ENCODE measurements at regions of chr4 and their contacts with region 1.

Region 1: GRCh38 chr4:26885912-26886274 is 25.3 kb downstream of the STIM2 start:
- DNase-seq: peak; percentile 87
- ATAC-seq: peak; percentile 74
- H3K4me3 ChIP-seq: peak overlapping the region in 4 of 5 experiments; percentile 25 to 61 (median 42)
- H3K4me3 Mint-ChIP-seq: peak overlapping the region; percentile 78
- H3K27ac ChIP-seq: peak overlapping the region; percentile 95 to 98
- H3K27ac Mint-ChIP-seq: peak overlapping the region; percentile 86
- H3K4me1 ChIP-seq: peaks cover 70 to 71% of the 10 kb centered on the region in 2 donors
- H3K4me1 Mint-ChIP-seq: peaks cover 83% of the 10 kb centered on the region
- H3K27me3 ChIP-seq: no peaks in the 10 kb centered on the region
- H3K27me3 Mint-ChIP-seq: no peaks in the 10 kb centered on the region
- CTCF ChIP-seq: no peak

Region 2: DNA sequence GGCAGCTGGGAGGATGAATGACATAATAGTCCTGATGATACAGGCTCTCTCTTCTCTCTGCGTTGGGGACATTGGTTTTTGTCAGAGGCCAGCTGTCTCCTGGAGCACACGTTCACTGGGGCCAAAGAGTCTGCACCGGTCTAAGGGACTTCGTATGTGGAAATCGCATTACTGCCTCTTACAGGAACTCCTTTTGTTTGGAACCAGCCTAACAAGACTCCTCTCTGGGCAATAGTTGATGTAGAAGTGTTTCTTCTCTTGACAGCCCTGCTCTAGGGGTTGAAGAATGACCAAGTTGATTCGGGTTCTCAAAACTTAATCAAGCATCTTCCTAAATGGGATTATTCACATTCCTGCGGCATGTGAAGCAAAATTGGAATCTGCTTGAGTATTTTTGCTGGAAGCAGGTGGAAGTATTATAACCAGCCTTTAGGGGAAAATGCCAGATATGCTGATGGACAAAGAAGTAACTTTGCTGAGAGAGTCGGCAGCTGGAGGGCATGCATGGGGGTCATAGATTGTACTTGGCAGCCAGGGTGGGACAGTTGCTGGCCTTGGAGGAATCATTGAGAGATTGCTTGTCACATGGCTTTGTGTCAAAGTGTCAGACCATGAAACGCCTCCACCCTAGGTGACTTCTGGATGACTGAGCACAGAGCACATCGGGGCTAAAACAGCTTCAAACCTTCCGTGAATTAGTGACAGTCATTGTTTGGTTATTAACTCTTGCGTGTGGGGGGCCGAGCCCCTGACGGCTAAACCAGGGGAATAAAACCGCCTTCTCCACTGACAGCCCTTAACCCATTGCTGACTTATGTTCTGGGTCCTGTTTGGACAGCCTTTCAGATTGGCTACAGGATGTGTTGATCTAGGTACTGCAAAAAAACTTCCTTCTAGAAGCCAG is 1264.6 kb before region 1 on chr4:
- CTCF ChIA-PET with region 1: no interaction called
- POLR2A ChIA-PET with region 1: no interaction called
- intact Hi-C with region 1: no loop called
- DNase-seq: no peak
- ATAC-seq: no peak
- H3K4me3 ChIP-seq: no peak overlapping the region
- H3K4me3 Mint-ChIP-seq: no peak overlapping the region
- H3K27ac ChIP-seq: no peak overlapping the region
- H3K27ac Mint-ChIP-seq: no peak overlapping the region
- H3K4me1 ChIP-seq: no peaks in the 10 kb centered on the region
- H3K4me1 Mint-ChIP-seq: no peaks in the 10 kb centered on the region
- H3K27me3 ChIP-seq: peaks cover 0 to 5% (median 0%) of the 10 kb centered on the region in 4 experiments
- H3K27me3 Mint-ChIP-seq: peaks cover 16% of the 10 kb centered on the region
- CTCF ChIP-seq: no peak

Region 3: GRCh38 chr4:26731351-26732035 is 154.4 kb before region 1 on chr4:
- CTCF ChIA-PET with region 1: no interaction called
- POLR2A ChIA-PET with region 1: no interaction called
- intact Hi-C with region 1: no loop called
- DNase-seq: no peak
- ATAC-seq: no peak
- H3K4me3 ChIP-seq: no peak overlapping the region
- H3K4me3 Mint-ChIP-seq: no peak overlapping the region
- H3K27ac ChIP-seq: no peak overlapping the region
- H3K27ac Mint-ChIP-seq: no peak overlapping the region
- H3K4me1 ChIP-seq: no peaks in the 10 kb centered on the region
- H3K4me1 Mint-ChIP-seq: no peaks in the 10 kb centered on the region
- H3K27me3 ChIP-seq: no peaks in the 10 kb centered on the region
- H3K27me3 Mint-ChIP-seq: no peaks in the 10 kb centered on the region
- CTCF ChIP-seq: no peak

Region 4: DNA sequence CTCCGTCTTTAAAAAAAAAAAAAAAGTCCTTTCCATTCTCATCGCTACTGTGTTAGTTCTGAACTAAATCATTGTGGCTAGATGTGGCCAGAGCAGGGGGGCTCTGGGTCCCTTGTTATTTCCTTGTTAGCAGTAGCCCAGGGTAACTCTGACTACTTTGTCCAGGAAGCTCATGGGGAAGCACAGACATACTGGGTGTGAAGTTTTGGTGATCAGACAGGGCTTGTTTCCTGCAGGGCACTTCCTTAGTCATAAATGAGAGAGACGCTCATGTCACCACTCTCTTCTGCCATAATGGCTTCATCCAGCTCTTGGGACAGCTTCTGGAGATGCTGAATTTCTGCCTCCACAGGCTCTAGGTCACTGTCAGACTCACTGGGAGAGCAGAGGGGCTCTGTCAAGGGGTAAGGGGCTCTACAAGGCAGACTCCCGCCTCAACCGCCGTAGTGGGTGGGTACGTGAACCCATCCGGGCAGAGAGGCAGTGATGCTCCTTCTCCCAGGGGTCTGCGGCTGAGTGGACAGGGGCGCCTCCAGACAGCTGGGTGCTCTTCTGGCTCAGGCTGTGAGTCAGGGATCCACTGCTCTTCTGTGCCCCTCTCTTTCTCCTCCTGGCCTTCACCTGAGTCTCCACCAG is 12.4 kb before region 1 on chr4:
- CTCF ChIA-PET with region 1: interaction called, 5 read pairs
- POLR2A ChIA-PET with region 1: no interaction called
- intact Hi-C with region 1: loop called (anchors 1 kb)
- DNase-seq: peak; percentile 68
- ATAC-seq: peak; percentile 67
- H3K4me3 ChIP-seq: no peak overlapping the region
- H3K4me3 Mint-ChIP-seq: peak overlapping the region; percentile 73
- H3K27ac ChIP-seq: peak overlapping the region; percentile 9 to 30
- H3K27ac Mint-ChIP-seq: peak overlapping the region; percentile 79
- H3K4me1 ChIP-seq: peaks cover 32 to 43% of the 10 kb centered on the region in 2 donors
- H3K4me1 Mint-ChIP-seq: peaks cover 81% of the 10 kb centered on the region
- H3K27me3 ChIP-seq: no peaks in the 10 kb centered on the region
- H3K27me3 Mint-ChIP-seq: no peaks in the 10 kb centered on the region
- CTCF ChIP-seq: no peak

Region 5: GRCh38 chr4:26936284-26937065 is 50.6 kb after region 1 on chr4:
- CTCF ChIA-PET with region 1: interaction called, 3 read pairs
- POLR2A ChIA-PET with region 1: interaction called, 3 read pairs
- intact Hi-C with region 1: loop called (anchors 5 kb)
- DNase-seq: no peak
- ATAC-seq: no peak
- H3K4me3 ChIP-seq: no peak overlapping the region
- H3K4me3 Mint-ChIP-seq: peak overlapping the region; percentile 4
- H3K27ac ChIP-seq: peak overlapping the region in 1 of 2 donors; percentile 72
- H3K27ac Mint-ChIP-seq: peak overlapping the region; percentile 59
- H3K4me1 ChIP-seq: peaks cover 34 to 43% of the 10 kb centered on the region in 2 donors
- H3K4me1 Mint-ChIP-seq: peaks cover 57% of the 10 kb centered on the region
- H3K27me3 ChIP-seq: no peaks in the 10 kb centered on the region
- H3K27me3 Mint-ChIP-seq: no peaks in the 10 kb centered on the region
- CTCF ChIP-seq: no peak

Region 6: DNA sequence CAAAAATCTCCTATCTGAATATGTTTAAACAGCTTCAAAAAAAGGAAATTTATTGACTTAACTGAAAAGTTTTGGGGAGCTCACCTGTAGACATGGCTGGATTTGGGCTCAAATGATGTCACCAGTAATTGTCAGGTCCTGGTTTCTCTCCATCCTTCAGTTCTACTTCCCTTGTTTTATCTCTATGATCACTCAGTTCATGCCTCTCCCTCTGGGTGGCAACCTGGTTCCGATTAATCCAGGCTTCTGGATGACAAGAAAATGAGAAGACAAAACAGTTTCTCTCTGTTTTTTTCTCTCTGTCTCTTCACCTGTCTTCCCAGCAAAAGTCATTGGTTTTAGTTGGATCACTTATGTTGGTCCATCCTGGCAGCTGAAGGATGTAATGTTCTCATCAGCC is 252.3 kb after region 1 on chr4:
- CTCF ChIA-PET with region 1: no interaction called
- POLR2A ChIA-PET with region 1: no interaction called
- intact Hi-C with region 1: no loop called
- DNase-seq: no peak
- ATAC-seq: no peak
- H3K4me3 ChIP-seq: no peak overlapping the region
- H3K4me3 Mint-ChIP-seq: no peak overlapping the region
- H3K27ac ChIP-seq: no peak overlapping the region
- H3K27ac Mint-ChIP-seq: no peak overlapping the region
- H3K4me1 ChIP-seq: no peaks in the 10 kb centered on the region
- H3K4me1 Mint-ChIP-seq: no peaks in the 10 kb centered on the region
- H3K27me3 ChIP-seq: no peaks in the 10 kb centered on the region
- H3K27me3 Mint-ChIP-seq: no peaks in the 10 kb centered on the region
- CTCF ChIP-seq: no peak

Region 7: GRCh38 chr4:28391877-28392276 is 1506.0 kb after region 1 on chr4:
- CTCF ChIA-PET with region 1: no interaction called
- POLR2A ChIA-PET with region 1: no interaction called
- intact Hi-C with region 1: no loop called
- DNase-seq: no peak
- ATAC-seq: no peak
- H3K4me3 ChIP-seq: no peak overlapping the region
- H3K4me3 Mint-ChIP-seq: no peak overlapping the region
- H3K27ac ChIP-seq: no peak overlapping the region
- H3K27ac Mint-ChIP-seq: no peak overlapping the region
- H3K4me1 ChIP-seq: no peaks in the 10 kb centered on the region
- H3K4me1 Mint-ChIP-seq: no peaks in the 10 kb centered on the region
- H3K27me3 ChIP-seq: no peaks in the 10 kb centered on the region
- H3K27me3 Mint-ChIP-seq: no peaks in the 10 kb centered on the region
- CTCF ChIP-seq: no peak

Measured in B cell (primary cell).